ENCODE measurements at regions of chr1 and their contacts with region 1.

Region 1: GRCh38 chr1:211698161-211699026 is 23.0 kb upstream of the NEK2 start:
- DNase-seq: peak; percentile 41
- ATAC-seq: peak; percentile 98
- H3K4me3 ChIP-seq: no peak overlapping the region
- H3K27ac ChIP-seq: no peak overlapping the region
- H3K4me1 ChIP-seq: no peaks in the 10 kb centered on the region
- H3K27me3 ChIP-seq: peaks cover 18% of the 10 kb centered on the region
- CTCF ChIP-seq: peak; percentile 92
- POLR2A ChIP-seq: no peak
- RAD21 ChIP-seq: peak; percentile 85

Region 2: DNA sequence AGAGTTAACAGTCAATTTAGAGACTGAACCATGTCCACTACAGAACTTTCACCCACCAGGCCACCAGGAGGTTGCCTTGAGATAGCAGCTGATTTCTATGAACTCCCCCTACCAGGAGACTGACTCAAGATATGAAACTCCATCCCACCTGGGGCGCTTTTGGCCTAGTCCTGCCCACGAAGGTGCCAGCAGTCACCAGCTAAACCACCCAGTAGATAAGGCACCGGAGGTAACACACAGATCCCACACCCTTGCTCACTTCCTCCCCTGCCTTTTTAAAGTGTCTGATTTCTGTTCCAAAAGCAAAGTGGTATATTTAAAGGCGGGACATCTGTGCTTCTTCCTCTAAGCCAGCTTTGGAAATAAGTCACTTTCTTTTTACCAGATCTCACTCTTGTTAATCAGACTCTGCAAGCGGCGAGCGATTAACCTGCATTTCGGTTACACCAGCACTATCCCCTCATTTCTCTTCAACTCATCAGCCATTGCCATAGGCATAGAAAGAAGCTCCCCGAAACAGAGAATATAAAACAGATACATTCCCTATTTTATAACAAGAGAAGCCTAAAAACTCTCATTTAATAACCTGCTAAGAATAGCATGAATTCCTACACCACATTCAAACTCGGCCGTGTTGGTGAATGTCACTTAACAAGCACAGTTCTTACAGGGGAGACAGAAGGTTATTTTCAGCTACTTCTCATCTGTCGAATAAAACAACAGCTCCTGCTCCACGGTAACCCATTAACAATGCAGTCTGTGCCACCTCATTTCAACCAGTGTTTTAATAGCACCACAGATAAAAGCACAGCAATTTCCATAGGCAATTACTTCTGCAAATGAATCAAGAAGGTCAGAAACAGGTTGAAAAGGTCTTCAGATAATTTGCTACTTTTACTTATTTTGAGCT is 882.5 kb before region 1 on chr1:
- CTCF ChIA-PET with region 1: no interaction called
- POLR2A ChIA-PET with region 1: no interaction called
- dilution Hi-C with region 1: no loop called
- in situ Hi-C with region 1: no loop called
- intact Hi-C with region 1: no loop called
- DNase-seq: no peak
- ATAC-seq: no peak
- H3K4me3 ChIP-seq: no peak overlapping the region
- H3K27ac ChIP-seq: no peak overlapping the region
- H3K4me1 ChIP-seq: no peaks in the 10 kb centered on the region
- H3K27me3 ChIP-seq: no peaks in the 10 kb centered on the region
- CTCF ChIP-seq: no peak
- POLR2A ChIP-seq: no peak
- RAD21 ChIP-seq: no peak

Region 3: GRCh38 chr1:211616232-211616979 is 82.0 kb before region 1 on chr1:
- CTCF ChIA-PET with region 1: no interaction called
- POLR2A ChIA-PET with region 1: no interaction called
- dilution Hi-C with region 1: no loop called
- in situ Hi-C with region 1: no loop called
- intact Hi-C with region 1: no loop called
- DNase-seq: no peak
- ATAC-seq: no peak
- H3K4me3 ChIP-seq: no peak overlapping the region
- H3K27ac ChIP-seq: peak overlapping the region; percentile 9; the same call in 1 of the 2 replicates
- H3K4me1 ChIP-seq: peaks cover 8% of the 10 kb centered on the region
- H3K27me3 ChIP-seq: no peaks in the 10 kb centered on the region
- CTCF ChIP-seq: no peak
- POLR2A ChIP-seq: no peak
- RAD21 ChIP-seq: no peak

Region 4: DNA sequence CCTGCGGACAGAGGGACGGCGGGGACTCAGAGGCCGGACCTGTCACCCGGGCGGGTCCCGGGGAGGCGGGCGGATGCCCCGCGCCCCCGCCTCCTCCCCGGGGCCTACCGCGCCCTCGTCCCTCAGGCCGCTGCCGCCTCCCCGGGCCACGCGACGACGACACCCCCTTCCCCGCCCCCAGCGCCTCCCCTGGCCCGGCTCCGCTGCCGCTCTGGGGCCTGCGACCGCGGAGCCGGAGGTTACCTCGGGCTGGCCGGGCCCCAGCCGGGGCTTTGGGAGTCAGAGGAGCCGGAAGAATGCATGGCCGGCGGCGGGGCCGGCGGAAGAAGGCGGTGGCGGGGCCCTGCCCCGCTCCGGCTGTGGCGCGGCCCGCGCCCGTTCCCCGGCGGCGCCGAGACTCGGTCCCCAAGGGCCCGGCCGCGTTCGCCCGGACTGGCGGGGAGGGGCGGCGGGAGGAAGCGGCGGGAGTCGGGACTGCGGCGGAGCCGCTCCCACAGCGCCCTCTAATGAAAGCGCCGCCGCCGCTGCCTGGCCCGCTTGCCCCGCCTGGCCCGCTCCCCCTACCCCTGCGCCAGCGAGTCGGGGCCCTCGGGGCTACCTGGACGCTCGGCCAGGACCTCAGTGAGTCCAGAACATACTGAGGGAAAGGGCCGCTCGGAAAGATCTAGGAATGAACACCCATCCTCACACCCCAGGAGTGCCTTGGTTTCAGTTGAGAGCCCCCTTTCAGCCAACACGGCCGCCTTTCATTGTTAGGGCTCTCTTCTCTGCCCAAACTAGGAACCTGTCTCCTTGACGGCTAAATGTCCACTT is 132.1 kb after region 1 on chr1 and contains the start of gene LPGAT1:
- CTCF ChIA-PET with region 1: interaction called, 5 read pairs
- POLR2A ChIA-PET with region 1: no interaction called
- dilution Hi-C with region 1: no loop called
- in situ Hi-C with region 1: no loop called
- intact Hi-C with region 1: loop called (anchors 1 kb)
- DNase-seq: peak; percentile 52
- ATAC-seq: peak; percentile 91
- H3K4me3 ChIP-seq: peak within 1 kb of the TSS; percentile 81
- H3K27ac ChIP-seq: peak within 1 kb of the TSS; percentile 39
- H3K4me1 ChIP-seq: peaks cover 12% of the 10 kb centered on the region
- H3K27me3 ChIP-seq: no peaks in the 10 kb centered on the region
- CTCF ChIP-seq: peak; percentile 69
- POLR2A ChIP-seq: peak; percentile 56
- RAD21 ChIP-seq: peak; percentile 45
- total RNA-seq, gene LPGAT1: 13.6 and 25.6 TPM in 2 replicates

Region 5: GRCh38 chr1:211944733-211945500 is 246.5 kb after region 1 on chr1:
- CTCF ChIA-PET with region 1: no interaction called
- POLR2A ChIA-PET with region 1: no interaction called
- dilution Hi-C with region 1: no loop called
- in situ Hi-C with region 1: no loop called
- intact Hi-C with region 1: loop called (anchors 1 kb)
- DNase-seq: peak; percentile 22
- ATAC-seq: peak; percentile 83
- H3K4me3 ChIP-seq: no peak overlapping the region
- H3K27ac ChIP-seq: no peak overlapping the region
- H3K4me1 ChIP-seq: peaks cover 2% of the 10 kb centered on the region
- H3K27me3 ChIP-seq: no peaks in the 10 kb centered on the region
- CTCF ChIP-seq: peak; percentile 29
- POLR2A ChIP-seq: no peak
- RAD21 ChIP-seq: peak; percentile 26; the same call in 1 of the 2 replicates

Region 6: DNA sequence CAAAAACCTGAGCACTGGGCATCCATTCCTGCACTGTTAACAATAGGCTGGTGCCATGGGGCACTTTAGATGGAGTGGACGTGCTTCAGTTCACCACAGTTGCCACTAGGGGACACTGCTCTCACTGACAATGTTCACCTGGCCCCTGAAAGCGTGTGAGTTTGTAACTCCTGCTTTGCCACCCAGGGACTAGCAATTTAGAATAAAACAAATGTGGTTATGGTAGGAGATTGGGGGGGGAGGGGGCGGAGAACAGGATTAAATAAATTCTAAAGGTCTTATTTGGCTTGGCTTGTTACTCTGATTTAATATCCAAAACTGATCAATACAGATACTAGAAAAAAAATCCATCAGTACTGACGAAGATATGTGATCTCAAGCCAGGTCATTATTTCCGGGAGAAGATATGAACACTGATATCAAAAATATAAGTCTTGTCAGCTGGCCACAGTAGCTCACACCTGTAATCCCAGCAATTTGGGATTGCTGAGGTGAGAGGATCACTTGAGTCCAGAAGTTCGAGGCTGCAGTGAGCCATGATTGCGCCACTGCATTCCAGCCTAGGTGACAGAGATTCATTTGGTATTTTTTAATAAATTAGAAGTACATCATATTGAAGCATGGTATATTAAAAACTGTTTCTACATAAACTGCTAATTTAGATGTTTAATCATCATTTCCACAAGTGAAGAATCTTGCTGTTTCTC is 313.8 kb after region 1 on chr1:
- CTCF ChIA-PET with region 1: no interaction called
- POLR2A ChIA-PET with region 1: no interaction called
- dilution Hi-C with region 1: no loop called
- in situ Hi-C with region 1: no loop called
- intact Hi-C with region 1: loop called (anchors 5 kb)
- DNase-seq: peak; percentile 65
- ATAC-seq: peak; percentile 98
- H3K4me3 ChIP-seq: no peak overlapping the region
- H3K27ac ChIP-seq: no peak overlapping the region
- H3K4me1 ChIP-seq: peaks cover 1% of the 10 kb centered on the region; the same call in 1 of the 2 replicates
- H3K27me3 ChIP-seq: no peaks in the 10 kb centered on the region
- CTCF ChIP-seq: peak; percentile 89
- POLR2A ChIP-seq: no peak
- RAD21 ChIP-seq: peak; percentile 80

Region 7: DNA sequence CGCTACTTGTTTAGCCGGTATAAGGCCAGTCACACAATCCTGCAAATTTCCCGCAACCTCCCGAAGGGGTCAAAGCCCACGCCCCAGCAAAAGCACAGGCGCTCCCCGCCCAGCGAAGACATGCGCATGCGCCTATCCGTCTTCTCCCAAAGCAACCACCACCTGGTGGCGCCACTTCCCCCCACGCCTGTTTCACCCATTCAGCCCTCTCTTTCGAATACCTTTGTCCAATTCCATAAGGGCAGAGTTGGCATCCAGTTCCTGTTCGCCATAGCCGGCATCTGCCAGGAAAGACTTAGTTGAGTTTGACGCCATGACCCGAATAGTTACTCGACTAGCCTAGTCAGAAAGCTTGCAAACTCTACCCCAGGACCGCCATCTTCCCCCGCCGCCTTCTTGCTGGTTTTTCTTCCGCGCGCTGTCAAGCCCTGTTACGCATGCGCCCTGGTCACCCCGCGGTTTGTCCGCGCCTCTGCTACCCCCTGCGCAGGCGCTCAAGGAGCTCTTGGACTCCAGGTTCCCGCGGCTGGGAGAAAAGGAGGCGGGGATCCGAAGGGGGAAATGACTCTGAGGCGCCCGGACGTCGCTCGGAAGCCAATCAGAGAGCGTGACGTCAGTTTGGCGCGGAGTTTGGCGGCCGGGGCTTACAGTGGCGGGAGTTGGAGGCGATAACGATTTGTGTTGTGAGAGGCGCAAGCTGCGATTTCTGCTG is 336.9 kb after region 1 on chr1 and contains the starts of genes DTL and INTS7:
- CTCF ChIA-PET with region 1: interaction called, 7 read pairs
- POLR2A ChIA-PET with region 1: no interaction called
- dilution Hi-C with region 1: no loop called
- in situ Hi-C with region 1: no loop called
- intact Hi-C with region 1: loop called (anchors 1 kb)
- DNase-seq: peak; percentile 99
- ATAC-seq: peak; percentile 87
- H3K4me3 ChIP-seq: peak within 1 kb of the TSS; percentile 77
- H3K27ac ChIP-seq: peak within 1 kb of the TSS; percentile 82
- H3K4me1 ChIP-seq: peaks cover 10% of the 10 kb centered on the region
- H3K27me3 ChIP-seq: no peaks in the 10 kb centered on the region
- CTCF ChIP-seq: peak; percentile 80
- POLR2A ChIP-seq: peak; percentile 82
- RAD21 ChIP-seq: no peak
- total RNA-seq, gene DTL: 16.7 and 19.9 TPM in 2 replicates
- total RNA-seq, gene INTS7: 20.3 and 24.9 TPM in 2 replicates